ENCODE measurements at regions of chr5 and their contacts with region 1.

Region 1: GRCh38 chr5:62312036-62312435 is 6.0 kb downstream of the KIF2A start:
- DNase-seq: no peak
- H3K4me3 Mint-ChIP-seq: no peak overlapping the region
- H3K27ac Mint-ChIP-seq: no peak overlapping the region
- H3K4me1 Mint-ChIP-seq: peaks cover 80% of the 10 kb centered on the region
- H3K27me3 Mint-ChIP-seq: no peaks in the 10 kb centered on the region

Region 2: DNA sequence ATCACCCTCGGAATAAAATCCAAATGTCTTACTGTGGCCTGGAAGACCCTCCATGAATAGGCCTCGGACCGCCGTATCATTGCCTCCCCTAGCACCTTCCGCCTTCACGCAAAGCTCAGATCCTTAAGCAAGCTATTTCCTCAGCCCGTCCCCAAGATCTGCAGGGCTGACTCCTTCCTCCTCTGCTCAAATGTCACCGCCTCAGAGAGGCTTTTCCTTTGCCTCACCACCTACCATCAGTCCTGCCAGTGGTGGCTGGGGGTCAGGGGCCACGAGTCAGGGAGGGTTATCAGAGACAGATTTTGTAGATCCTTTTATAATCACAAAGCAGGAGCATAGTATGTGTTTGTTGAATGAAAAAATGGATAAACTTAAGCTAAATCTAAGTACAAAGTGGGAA is 80.5 kb before region 1 on chr5:
- CTCF ChIA-PET with region 1: no interaction called
- intact Hi-C with region 1: no loop called
- DNase-seq: no peak
- H3K4me3 Mint-ChIP-seq: no peak overlapping the region
- H3K27ac Mint-ChIP-seq: no peak overlapping the region
- H3K4me1 Mint-ChIP-seq: no peaks in the 10 kb centered on the region
- H3K27me3 Mint-ChIP-seq: no peaks in the 10 kb centered on the region

Region 3: DNA sequence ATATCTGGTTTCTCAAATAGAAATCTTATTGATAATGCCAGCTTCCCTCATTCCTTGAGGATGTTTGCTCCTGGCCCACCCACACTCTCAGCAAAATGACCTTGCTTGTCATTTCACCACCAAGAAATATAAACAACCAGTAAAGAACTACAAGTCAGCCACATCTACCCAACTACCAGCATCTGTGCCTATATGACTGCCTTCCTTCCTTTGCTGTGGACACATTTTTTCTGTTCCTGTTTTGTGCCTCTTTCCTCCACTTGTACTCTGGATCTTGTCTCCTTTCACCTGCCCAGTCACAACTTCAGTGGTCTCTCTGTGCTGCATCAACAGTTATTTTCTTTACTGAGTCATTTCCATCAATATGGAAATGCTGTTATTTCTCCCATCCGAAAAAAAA is 14.3 kb after region 1 on chr5:
- CTCF ChIA-PET with region 1: interaction called, 5 read pairs
- intact Hi-C with region 1: loop called (anchors 2 kb)
- DNase-seq: no peak
- H3K4me3 Mint-ChIP-seq: no peak overlapping the region
- H3K27ac Mint-ChIP-seq: peak overlapping the region; percentile 21
- H3K4me1 Mint-ChIP-seq: peaks cover 71% of the 10 kb centered on the region
- H3K27me3 Mint-ChIP-seq: no peaks in the 10 kb centered on the region

Region 4: GRCh38 chr5:62340392-62340791 is 28.4 kb after region 1 on chr5:
- CTCF ChIA-PET with region 1: interaction called, 3 read pairs
- intact Hi-C with region 1: loop called (anchors 2 kb)
- DNase-seq: no peak
- H3K4me3 Mint-ChIP-seq: no peak overlapping the region
- H3K27ac Mint-ChIP-seq: no peak overlapping the region
- H3K4me1 Mint-ChIP-seq: peaks cover 52% of the 10 kb centered on the region
- H3K27me3 Mint-ChIP-seq: no peaks in the 10 kb centered on the region

Measured in activated naive CD4-positive, alpha-beta T cell treated with anti-CD3 and anti-CD28 coated beads for 36 hours (primary cell).